ENCODE measurements at regions of chr3 and their contacts with region 1.

Region 1: GRCh38 chr3:43503067-43503728 is 118.6 kb downstream of the ANO10 start:
- DNase-seq: no peak
- ATAC-seq: no peak

Region 2: DNA sequence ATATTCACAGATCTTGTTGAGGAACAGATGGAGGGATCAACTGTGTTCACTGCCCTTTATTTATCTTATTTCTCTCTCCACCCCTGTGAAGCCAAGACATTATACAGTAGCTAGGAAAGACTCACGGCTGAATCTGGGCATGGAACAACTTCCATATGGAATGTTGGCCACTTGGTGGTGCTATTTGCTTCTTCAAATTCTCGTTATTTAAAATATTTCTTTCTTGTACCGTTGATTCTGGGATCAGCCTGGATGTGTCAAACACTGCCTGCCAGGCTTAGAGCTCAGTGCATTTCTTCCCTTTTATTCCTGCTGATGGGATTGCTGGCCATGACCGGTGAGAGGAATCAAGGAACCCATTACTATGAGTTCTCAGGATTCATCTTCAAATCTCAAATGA is 541.6 kb before region 1 on chr3:
- intact Hi-C with region 1: loop called (anchors 5 kb)
- DNase-seq: no peak
- ATAC-seq: peak; percentile 71

Region 3: GRCh38 chr3:43162230-43163084 is 340.7 kb before region 1 on chr3:
- intact Hi-C with region 1: loop called (anchors 1 kb)
- DNase-seq: no peak
- ATAC-seq: no peak

Region 4: GRCh38 chr3:43215663-43216275 is 287.4 kb before region 1 on chr3:
- intact Hi-C with region 1: loop called (anchors 5 kb)
- DNase-seq: no peak
- ATAC-seq: no peak

Region 5: DNA sequence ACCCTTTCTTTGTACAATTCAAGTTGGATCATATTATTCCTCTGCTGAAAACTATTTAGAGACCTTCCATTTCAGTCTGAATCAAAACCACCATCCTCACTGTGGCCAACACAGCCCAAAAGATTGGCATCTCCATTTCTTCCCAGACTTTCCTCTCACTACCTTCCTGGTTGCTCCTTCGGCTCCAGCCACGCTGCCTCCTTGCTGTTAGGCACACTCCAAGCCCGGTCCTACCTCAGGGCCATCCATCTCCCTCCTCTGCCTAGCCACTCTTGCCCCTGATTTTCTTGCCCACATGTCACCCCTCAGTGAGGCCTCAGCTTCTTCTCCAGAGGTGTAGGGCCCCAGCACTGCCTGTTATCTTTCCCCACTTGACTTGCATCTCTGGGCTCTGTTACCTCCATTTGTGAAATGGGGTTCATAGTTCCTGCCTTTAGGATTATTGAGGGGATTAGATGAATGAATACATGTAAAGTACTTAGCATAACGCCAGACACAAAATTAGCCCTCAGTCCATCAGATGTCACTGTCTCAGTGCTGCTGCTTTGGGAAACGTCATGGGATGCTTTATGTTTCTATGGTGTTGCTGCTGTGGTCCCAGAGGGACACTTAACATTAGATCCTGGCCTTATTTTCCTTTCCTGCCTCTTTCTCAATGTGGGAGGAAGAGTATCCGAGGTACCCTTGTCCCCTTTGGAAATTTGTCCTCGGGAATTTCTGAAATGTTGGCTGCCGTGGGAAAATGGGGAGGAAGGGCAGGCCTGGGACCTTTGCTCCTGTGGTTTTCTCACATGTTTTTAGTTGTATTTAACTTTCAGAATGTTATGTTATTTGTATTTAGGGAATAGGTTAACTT is 185.5 kb before region 1 on chr3:
- intact Hi-C with region 1: loop called (anchors 10 kb)
- DNase-seq: no peak
- ATAC-seq: peak; percentile 68

Region 6: GRCh38 chr3:43378066-43378935 is 124.9 kb before region 1 on chr3:
- intact Hi-C with region 1: loop called (anchors 5 kb)
- DNase-seq: no peak
- ATAC-seq: no peak

Region 7: DNA sequence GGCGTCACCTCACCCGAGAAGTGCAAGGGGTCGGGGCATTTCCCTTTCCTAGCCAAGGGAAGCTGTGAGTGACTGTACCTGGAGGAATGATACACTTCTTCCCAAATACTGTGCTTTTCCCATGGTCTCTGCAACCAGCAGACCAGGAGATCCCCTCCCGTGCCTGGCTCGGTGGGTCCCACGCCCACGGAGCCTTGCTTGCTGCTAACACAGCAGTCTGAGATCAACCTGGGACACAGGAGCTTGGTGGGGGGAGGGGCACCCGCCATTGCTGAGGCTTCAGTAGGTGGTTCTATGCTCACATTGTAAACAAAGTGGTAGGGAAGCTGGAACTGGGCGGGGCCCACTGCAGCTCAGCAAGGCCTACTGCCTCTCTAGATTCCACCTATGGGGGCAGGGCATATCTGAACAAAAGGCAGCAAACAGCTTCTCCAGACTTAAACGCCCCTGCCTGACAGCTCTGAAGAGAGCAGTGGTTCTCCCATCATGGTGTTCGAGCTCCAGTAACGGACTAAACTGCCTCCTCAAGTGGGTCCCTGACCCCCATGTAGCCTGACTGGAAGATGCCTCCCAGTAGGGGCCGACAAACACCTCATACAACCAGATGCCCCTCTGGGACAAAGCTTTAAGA is 156.2 kb after region 1 on chr3:
- intact Hi-C with region 1: no loop called
- DNase-seq: no peak
- ATAC-seq: no peak